MCF 10A (cell line): ENCODE measurements at regions of chr7 and their contacts with region 1.

Region 1: GRCh38 chr7:55534175-55534915 is 38.0 kb downstream of the VOPP1 start:
- DNase-seq: peak; percentile 83
- H3K4me3 Mint-ChIP-seq: peak overlapping the region; percentile 1
- H3K27ac Mint-ChIP-seq: peak overlapping the region; percentile 69
- H3K4me1 Mint-ChIP-seq: peaks cover 61% of the 10 kb centered on the region
- H3K27me3 Mint-ChIP-seq: no peaks in the 10 kb centered on the region
- CTCF ChIP-seq: no peak

Region 2: GRCh38 chr7:55477781-55478374 is 56.5 kb before region 1 on chr7:
- CTCF ChIA-PET with region 1: no interaction called
- POLR2A ChIA-PET with region 1: no interaction called
- intact Hi-C with region 1: no loop called
- DNase-seq: no peak
- H3K4me3 Mint-ChIP-seq: no peak overlapping the region
- H3K27ac Mint-ChIP-seq: peak overlapping the region; percentile 21
- H3K4me1 Mint-ChIP-seq: peaks cover 10% of the 10 kb centered on the region
- H3K27me3 Mint-ChIP-seq: no peaks in the 10 kb centered on the region
- CTCF ChIP-seq: no peak

Region 3: GRCh38 chr7:55552320-55553023 is 18.1 kb after region 1 on chr7:
- CTCF ChIA-PET with region 1: interaction called, 3 read pairs
- POLR2A ChIA-PET with region 1: interaction called, 42 read pairs
- intact Hi-C with region 1: no loop called
- DNase-seq: peak; percentile 71
- H3K4me3 Mint-ChIP-seq: peak overlapping the region; percentile 54
- H3K27ac Mint-ChIP-seq: peak overlapping the region; percentile 75
- H3K4me1 Mint-ChIP-seq: peaks cover 56% of the 10 kb centered on the region
- H3K27me3 Mint-ChIP-seq: no peaks in the 10 kb centered on the region
- CTCF ChIP-seq: no peak